ENCODE measurements at regions of chr19 and their contacts with region 1.

Region 1: DNA sequence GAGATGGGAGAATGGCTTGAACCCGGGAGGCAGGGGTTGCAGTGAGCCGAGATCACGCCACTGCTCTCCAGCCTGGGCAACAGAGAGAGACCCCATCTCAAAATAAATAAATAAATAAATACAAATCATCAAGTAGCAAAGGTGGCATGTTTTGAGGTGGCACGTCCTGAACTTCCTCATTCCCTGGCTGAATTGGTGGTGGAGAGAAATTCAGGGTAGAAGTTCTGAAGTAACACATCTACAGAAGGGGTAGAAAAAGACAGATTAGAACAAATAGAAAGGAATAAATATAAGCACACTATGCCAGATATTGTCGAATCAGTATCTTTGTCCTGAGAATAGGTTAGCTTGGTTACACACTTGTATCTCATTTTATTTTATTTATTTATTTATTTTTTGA is 6.3 kb downstream of the IFI30 start:
- DNase-seq: no peak
- H3K4me3 ChIP-seq: no peak overlapping the region
- H3K27ac ChIP-seq: no peak overlapping the region
- H3K4me1 ChIP-seq: no peaks in the 10 kb centered on the region
- H3K27me3 ChIP-seq: no peaks in the 10 kb centered on the region
- CTCF ChIP-seq: no peak
- POLR2A ChIP-seq: no peak

Region 2: GRCh38 chr19:17616961-17617806 is 562.8 kb before region 1 on chr19:
- intact Hi-C with region 1: no loop called
- DNase-seq: no peak
- H3K4me3 ChIP-seq: no peak overlapping the region
- H3K27ac ChIP-seq: no peak overlapping the region
- H3K4me1 ChIP-seq: peaks cover 0 to 6% of the 10 kb centered on the region in 2 donors
- H3K27me3 ChIP-seq: peaks cover 2 to 44% of the 10 kb centered on the region in 2 donors
- CTCF ChIP-seq: no peak
- POLR2A ChIP-seq: no peak

Region 3: GRCh38 chr19:17755977-17756670 is 423.8 kb before region 1 on chr19:
- intact Hi-C with region 1: no loop called
- DNase-seq: no peak
- H3K4me3 ChIP-seq: no peak overlapping the region
- H3K27ac ChIP-seq: no peak overlapping the region
- H3K4me1 ChIP-seq: no peaks in the 10 kb centered on the region
- H3K27me3 ChIP-seq: no peaks in the 10 kb centered on the region
- CTCF ChIP-seq: no peak
- POLR2A ChIP-seq: no peak

Region 4: DNA sequence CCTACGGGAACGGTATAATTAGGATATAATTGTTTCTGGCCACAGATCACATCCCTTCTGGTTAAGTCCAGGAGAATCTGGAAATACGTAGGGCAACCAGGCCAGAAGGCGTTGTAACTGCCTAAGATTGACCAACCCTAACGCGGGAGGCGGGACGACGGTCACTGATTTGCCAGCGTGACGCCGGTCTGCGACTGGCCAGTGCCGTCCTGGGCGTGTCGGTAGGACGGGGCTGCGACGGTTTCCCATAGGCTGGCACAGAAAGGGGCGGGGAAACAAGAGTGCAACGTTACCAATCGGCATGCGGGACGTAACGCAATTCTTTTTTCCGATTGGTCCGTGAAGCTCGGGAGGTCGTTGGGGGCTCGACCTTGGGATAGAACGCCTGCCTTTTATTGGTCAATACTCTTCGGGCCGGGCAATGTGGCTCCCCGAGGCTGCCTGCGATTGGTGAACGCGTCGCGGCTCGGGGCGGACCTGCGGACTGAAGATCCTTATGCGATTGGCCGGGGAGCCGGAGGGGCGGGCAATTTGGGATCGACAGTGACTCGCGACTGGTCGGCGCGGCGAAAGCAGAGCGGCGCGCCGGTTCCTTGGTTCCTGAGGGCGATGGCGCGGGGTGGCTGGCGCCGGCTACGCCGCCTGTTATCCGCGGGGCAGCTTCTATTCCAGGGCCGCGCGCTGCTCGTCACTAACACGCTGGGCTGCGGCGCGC is 12.9 kb after region 1 on chr19 and contains the start of gene MPV17L2:
- intact Hi-C with region 1: no loop called
- DNase-seq: peak; percentile 100
- H3K4me3 ChIP-seq: peak within 1 kb of the TSS; percentile 77 to 96 (median 82)
- H3K27ac ChIP-seq: peak within 1 kb of the TSS; percentile 95 to 99
- H3K4me1 ChIP-seq: peaks cover 0 to 8% of the 10 kb centered on the region in 2 donors
- H3K27me3 ChIP-seq: no peaks in the 10 kb centered on the region
- CTCF ChIP-seq: peak in 2 of 3 donors; percentile 17 to 34
- POLR2A ChIP-seq: peak; percentile 92
- total RNA-seq, gene MPV17L2: 24.3 to 41.3 (median 37.1) TPM

Region 5: DNA sequence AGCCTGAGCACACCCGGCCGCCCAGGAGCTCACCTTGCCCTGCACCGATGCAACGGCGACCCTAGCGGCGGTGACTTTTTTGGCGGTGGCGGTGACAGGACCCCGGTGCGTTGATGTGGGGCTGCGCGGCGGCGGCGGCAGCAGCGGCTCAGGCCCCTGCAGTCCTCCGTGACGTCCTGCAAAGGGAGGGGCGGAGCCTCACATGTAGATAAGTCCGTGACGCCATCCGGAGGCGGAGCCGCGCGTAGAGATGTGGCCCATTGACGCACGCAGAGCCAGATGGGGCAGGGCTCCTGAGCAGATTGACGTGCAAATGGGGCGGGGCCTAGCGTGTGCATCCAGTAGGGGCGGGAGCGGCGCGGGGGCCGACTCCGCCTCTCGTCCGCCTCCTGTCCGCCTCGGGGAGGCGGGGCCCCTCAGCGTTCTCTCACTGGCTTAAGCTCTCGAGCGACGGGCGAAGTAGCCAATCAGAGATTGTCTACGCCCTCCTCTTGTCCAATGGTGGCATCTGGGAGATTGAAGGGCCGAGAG is 24.0 kb after region 1 on chr19 and contains the start of gene RAB3A:
- intact Hi-C with region 1: no loop called
- DNase-seq: peak; percentile 99 to 100
- H3K4me3 ChIP-seq: peak within 1 kb of the TSS; percentile 56 to 77 (median 74)
- H3K27ac ChIP-seq: peak within 1 kb of the TSS; percentile 96 to 99
- H3K4me1 ChIP-seq: peaks cover 0 to 17% of the 10 kb centered on the region in 2 donors
- H3K27me3 ChIP-seq: no peaks in the 10 kb centered on the region
- CTCF ChIP-seq: no peak
- POLR2A ChIP-seq: no peak
- total RNA-seq, gene RAB3A: 0.66 to 1.2 (median 1.1) TPM

Region 6: GRCh38 chr19:18224525-18225354 is 44.8 kb after region 1 on chr19:
- intact Hi-C with region 1: loop called (anchors 2 kb)
- DNase-seq: peak; percentile 97 to 99
- H3K4me3 ChIP-seq: peak overlapping the region; percentile 29 to 61 (median 35)
- H3K27ac ChIP-seq: peak overlapping the region in 1 of 2 donors; percentile 20
- H3K4me1 ChIP-seq: peaks cover 0 to 5% of the 10 kb centered on the region in 2 donors
- H3K27me3 ChIP-seq: peaks cover 13 to 66% of the 10 kb centered on the region in 2 donors
- CTCF ChIP-seq: no peak
- POLR2A ChIP-seq: no peak

Measured in breast epithelium (tissue), 4 donors.